Aorta (tissue), 5 donors: ENCODE measurements at regions of chr19 and their contacts with region 1.

Region 1: GRCh38 chr19:13588957-13589833 is 82.9 kb upstream of the CACNA1A start:
- DNase-seq: peak; percentile 75 to 92
- ATAC-seq: peak; percentile 82
- H3K4me3 ChIP-seq: no peak overlapping the region
- H3K27ac ChIP-seq: no peak overlapping the region
- H3K4me1 ChIP-seq: no peaks in the 10 kb centered on the region
- H3K27me3 ChIP-seq: no peaks in the 10 kb centered on the region

Region 2: DNA sequence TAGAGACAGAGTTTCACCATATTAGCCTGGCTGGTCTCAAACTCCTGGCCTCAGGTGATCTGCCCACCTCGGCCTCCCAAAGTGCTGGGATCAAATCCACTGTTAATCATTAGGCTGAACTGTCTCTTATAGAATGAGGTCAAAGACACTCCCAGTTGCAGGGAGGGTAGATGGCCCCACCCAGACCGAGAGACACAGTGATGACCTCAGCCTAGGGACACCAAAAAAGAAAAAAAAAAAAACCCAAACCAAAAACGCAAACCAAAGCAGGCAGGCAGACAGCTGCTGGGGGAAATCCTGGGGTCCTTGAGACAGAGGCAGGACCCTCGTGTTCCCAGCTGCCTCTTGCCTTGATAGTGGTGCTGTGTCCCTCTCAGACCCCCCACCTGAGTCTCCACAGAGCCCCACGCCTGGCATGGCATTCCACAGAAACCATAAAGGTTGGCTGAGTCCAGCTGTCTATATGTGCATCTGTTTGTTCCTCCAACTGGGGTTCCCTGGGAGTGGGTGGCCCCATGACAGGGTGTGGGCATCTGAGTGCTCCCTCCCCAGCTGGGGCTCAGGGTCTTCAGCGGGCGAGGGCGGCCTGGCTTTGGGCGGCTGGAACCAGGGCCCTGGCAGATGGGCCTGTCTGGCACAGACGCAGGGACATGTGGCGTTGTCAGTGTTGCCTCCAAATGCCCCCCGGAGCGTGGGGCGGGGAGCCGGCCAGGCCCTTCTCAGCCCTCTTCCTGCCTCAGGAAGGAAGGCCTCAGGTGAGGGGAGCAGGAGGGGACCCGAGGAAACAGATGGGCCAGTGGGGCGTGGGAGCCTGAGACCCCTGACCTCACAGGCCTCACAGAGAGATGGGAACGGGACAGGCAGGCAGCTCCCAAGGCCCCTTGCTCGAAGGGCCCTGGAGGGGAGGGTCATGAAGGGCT is 614.6 kb before region 1 on chr19:
- intact Hi-C with region 1: loop called (anchors 10 kb)
- DNase-seq: no peak
- ATAC-seq: no peak
- H3K4me3 ChIP-seq: no peak overlapping the region
- H3K27ac ChIP-seq: no peak overlapping the region
- H3K4me1 ChIP-seq: no peaks in the 10 kb centered on the region
- H3K27me3 ChIP-seq: no peaks in the 10 kb centered on the region

Region 3: DNA sequence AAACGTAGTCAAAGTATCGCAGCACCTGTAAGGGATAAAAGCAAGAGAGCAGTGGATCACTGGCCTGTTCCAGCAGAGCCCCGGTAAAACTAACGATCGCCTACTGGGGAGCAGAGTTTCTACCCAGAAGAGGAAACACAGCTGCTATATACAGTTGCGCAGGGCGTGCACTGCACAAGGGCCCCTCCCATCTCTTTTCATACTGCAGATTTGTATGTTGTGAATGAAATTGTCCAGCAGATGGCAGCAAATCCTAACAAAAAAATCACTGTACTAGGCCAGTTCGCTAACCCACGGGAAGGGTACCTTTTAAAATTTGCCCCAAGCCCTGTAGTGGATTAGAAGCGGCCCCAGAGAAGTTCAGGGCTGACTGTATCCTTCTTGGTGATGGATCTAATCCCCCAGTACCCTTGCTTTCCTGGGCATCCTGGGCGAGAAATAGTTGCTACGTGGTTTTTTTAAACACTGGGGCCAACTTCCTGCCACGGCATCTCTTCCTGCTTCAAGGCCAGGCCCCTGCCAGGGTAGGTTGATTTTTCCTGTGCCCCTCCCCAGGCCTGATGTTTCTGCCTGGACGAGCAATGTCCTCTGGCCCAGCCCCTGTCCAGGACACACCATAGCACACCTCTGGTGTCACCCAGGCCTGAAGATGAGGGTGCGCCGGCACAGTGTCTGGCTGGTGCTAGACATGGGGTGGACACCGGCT is 311.9 kb before region 1 on chr19:
- intact Hi-C with region 1: loop called (anchors 1 to 2 kb)
- DNase-seq: peak; percentile 64 to 71
- ATAC-seq: peak; percentile 88
- H3K4me3 ChIP-seq: no peak overlapping the region
- H3K27ac ChIP-seq: no peak overlapping the region
- H3K4me1 ChIP-seq: no peaks in the 10 kb centered on the region
- H3K27me3 ChIP-seq: no peaks in the 10 kb centered on the region

Region 4: DNA sequence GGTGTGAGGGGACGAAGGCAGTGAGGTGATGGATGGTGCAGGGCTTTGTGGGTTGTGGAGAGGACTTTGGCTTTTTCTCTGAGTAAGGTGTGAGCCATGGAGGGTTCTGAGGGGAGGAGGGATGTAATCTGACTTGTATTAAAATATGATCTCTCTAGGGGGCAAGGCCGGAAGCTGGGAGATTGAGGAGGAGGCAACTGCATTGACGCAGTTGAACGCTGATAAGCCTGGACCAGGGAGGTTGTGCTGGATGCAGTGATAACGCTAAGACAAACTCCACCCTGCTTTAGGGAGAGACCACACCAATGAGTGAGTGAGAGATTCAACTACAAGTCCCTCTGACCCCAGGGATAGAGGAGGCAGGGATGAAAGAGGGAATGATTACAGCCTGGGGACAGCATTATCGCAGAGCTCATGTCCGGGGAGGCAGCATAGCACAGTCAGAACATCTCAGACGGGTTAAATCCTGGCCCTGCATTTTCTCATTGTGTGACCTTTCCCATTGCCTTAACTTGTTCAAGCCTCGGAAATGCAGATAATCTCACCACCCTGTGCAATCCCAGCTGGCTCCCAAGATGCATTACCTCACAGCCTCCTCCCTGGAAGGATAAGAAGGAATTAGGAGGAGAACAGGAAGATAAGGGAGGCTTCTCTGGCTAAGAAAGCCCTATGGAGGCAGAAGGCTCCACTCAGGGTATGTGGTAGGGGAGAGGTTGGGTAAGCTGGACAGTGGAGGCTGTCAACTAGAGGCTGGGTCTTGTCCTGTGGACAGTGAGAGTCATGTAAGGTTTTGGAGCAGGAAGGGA is 207.2 kb before region 1 on chr19:
- intact Hi-C with region 1: no loop called
- DNase-seq: no peak
- ATAC-seq: no peak
- H3K4me3 ChIP-seq: no peak overlapping the region
- H3K27ac ChIP-seq: no peak overlapping the region
- H3K4me1 ChIP-seq: no peaks in the 10 kb centered on the region
- H3K27me3 ChIP-seq: no peaks in the 10 kb centered on the region

Region 5: GRCh38 chr19:13441810-13442512 is 147.2 kb before region 1 on chr19:
- intact Hi-C with region 1: loop called in 1 of 2 experiments (anchors 5 kb)
- DNase-seq: no peak
- ATAC-seq: no peak
- H3K4me3 ChIP-seq: no peak overlapping the region
- H3K27ac ChIP-seq: no peak overlapping the region
- H3K4me1 ChIP-seq: no peaks in the 10 kb centered on the region
- H3K27me3 ChIP-seq: peaks cover 0 to 2% of the 10 kb centered on the region in 2 donors

Region 6: GRCh38 chr19:13637664-13638063 is 48.5 kb after region 1 on chr19:
- intact Hi-C with region 1: no loop called
- DNase-seq: no peak
- ATAC-seq: no peak
- H3K4me3 ChIP-seq: no peak overlapping the region
- H3K27ac ChIP-seq: no peak overlapping the region
- H3K4me1 ChIP-seq: no peaks in the 10 kb centered on the region
- H3K27me3 ChIP-seq: no peaks in the 10 kb centered on the region